ENCODE measurements at regions of chr11 and their contacts with region 1.

Region 1: GRCh38 chr11:33161120-33162005 is at the start of gene CSTF3:
- DNase-seq: peak; percentile 98
- ATAC-seq: peak; percentile 98
- H3K4me3 ChIP-seq: peak within 1 kb of the TSS; percentile 76 to 96 (median 83)
- H3K27ac ChIP-seq: peak within 1 kb of the TSS; percentile 86
- H3K4me1 ChIP-seq: peaks cover 42% of the 10 kb centered on the region
- H3K27me3 ChIP-seq: no peaks in the 10 kb centered on the region
- CTCF ChIP-seq: peak; percentile 37
- EP300 ChIP-seq: peak in 1 of 2 experiments; percentile 15; a peak in 1 of 4 replicates
- POLR2A ChIP-seq: peak; percentile 69 to 91
- RAD21 ChIP-seq: no peak
- total RNA-seq, gene CSTF3: 43.6 and 53.0 TPM in 2 replicates

Region 2: GRCh38 chr11:32893343-32894148 is 267.8 kb before region 1 on chr11:
- CTCF ChIA-PET with region 1: no interaction called
- POLR2A ChIA-PET with region 1: no interaction called
- in situ Hi-C with region 1: no loop called
- intact Hi-C with region 1: loop called (anchors 5 kb)
- DNase-seq: peak; percentile 58
- ATAC-seq: peak; percentile 77
- H3K4me3 ChIP-seq: peak overlapping the region; percentile 73 to 98 (median 93)
- H3K27ac ChIP-seq: peak overlapping the region; percentile 88
- H3K4me1 ChIP-seq: peaks cover 24% of the 10 kb centered on the region
- H3K27me3 ChIP-seq: peaks cover 0 to 3% of the 10 kb centered on the region in 2 experiments; a peak in 1 of 5 replicates
- CTCF ChIP-seq: peak; percentile 72
- EP300 ChIP-seq: no peak
- POLR2A ChIP-seq: no peak
- RAD21 ChIP-seq: no peak; the same call in 1 of the 2 replicates

Region 3: GRCh38 chr11:33211580-33211979 is 50.2 kb after region 1 on chr11:
- CTCF ChIA-PET with region 1: no interaction called
- POLR2A ChIA-PET with region 1: no interaction called
- in situ Hi-C with region 1: no loop called
- intact Hi-C with region 1: loop called (anchors 2 kb)
- DNase-seq: peak; percentile 89
- ATAC-seq: peak; percentile 87
- H3K4me3 ChIP-seq: no peak overlapping the region
- H3K27ac ChIP-seq: no peak overlapping the region
- H3K4me1 ChIP-seq: peaks cover 24% of the 10 kb centered on the region
- H3K27me3 ChIP-seq: no peaks in the 10 kb centered on the region
- CTCF ChIP-seq: no peak
- EP300 ChIP-seq: peak; percentile 45 to 54; a peak in 2 of 4 replicates
- POLR2A ChIP-seq: no peak
- RAD21 ChIP-seq: no peak

Region 4: DNA sequence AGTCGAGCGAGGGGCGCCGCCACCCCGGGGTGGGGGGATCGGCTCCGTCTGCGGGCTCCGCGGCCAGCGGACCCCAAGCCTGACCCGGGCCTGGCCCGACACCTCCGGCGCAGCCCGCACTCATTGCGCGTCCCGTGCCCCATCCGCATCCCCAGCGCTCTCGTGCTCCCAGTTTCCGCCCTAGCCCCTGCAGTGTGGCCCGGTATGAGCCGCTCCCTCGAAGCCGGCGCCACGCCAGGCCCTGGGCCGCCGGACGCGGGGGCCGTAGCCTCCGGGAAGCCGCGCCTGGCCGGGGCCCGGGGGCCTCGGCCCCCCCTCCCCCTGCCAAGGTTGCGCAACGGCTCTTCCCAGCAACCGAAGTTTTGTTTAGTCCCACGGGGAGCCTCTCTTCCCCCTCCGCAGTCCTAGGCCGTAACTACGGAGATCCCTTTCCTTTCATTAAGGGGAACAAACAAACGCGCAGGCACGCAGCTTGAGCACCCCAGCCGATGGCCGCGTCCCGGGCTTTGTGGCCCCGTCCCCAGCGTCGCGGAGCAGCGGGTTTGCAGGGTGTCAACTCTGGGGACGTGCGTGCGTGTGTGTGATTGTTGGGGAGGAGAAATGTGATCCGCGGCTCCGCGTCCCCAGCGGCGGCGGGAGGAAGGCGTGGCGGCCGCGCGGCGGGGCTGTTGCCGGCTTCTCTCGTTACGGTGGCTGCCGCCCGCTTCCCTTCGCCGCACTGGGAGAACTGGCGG is 96.7 kb after region 1 on chr11:
- CTCF ChIA-PET with region 1: no interaction called
- POLR2A ChIA-PET with region 1: no interaction called
- in situ Hi-C with region 1: no loop called
- intact Hi-C with region 1: loop called (anchors 2 kb)
- DNase-seq: peak; percentile 63
- ATAC-seq: peak; percentile 74
- H3K4me3 ChIP-seq: peak overlapping the region; percentile 98 to 100 (median 99)
- H3K27ac ChIP-seq: peak overlapping the region; percentile 98
- H3K4me1 ChIP-seq: peaks cover 42% of the 10 kb centered on the region
- H3K27me3 ChIP-seq: no peaks in the 10 kb centered on the region; a peak in 2 of 5 replicates
- CTCF ChIP-seq: peak; percentile 46
- EP300 ChIP-seq: no peak
- POLR2A ChIP-seq: peak; percentile 56 to 80
- RAD21 ChIP-seq: peak; percentile 28; the same call in 1 of the 2 replicates

Region 5: DNA sequence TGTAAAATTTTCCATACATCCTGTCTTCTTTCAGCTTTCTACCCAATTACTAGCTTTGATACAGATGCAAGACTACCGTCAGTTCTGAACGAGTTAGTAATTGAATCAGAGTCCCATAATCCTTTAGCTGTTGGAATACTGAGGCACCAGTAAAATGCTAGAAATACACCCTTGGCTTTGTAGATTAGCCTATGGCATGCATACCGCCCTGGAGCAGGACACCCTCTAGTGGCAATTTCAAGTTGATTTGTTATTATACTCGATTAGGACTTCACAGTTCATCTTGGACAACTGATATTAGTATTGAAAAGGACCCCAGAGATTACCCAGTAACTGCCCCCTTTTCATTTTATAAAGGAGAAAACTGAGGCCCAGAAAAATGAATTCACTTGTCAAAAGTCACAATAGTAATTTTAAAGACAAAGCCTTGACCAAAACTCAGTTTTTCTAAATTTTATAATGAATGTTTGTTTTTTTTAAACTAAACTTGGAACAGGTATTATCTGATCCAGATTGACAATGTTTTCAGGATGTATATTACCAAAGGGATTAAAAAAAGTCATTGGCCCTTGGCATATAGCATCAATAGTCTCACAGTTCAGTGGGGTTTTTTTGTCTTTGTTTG is 168.5 kb after region 1 on chr11:
- CTCF ChIA-PET with region 1: interaction called, 18 read pairs
- POLR2A ChIA-PET with region 1: no interaction called
- in situ Hi-C with region 1: no loop called
- intact Hi-C with region 1: loop called (anchors 1 kb)
- DNase-seq: peak; percentile 50
- ATAC-seq: peak; percentile 85
- H3K4me3 ChIP-seq: no peak overlapping the region
- H3K27ac ChIP-seq: no peak overlapping the region
- H3K4me1 ChIP-seq: no peaks in the 10 kb centered on the region
- H3K27me3 ChIP-seq: no peaks in the 10 kb centered on the region
- CTCF ChIP-seq: peak; percentile 67
- EP300 ChIP-seq: no peak
- POLR2A ChIP-seq: no peak
- RAD21 ChIP-seq: peak; percentile 50

Region 6: GRCh38 chr11:33687733-33688479 is 526.5 kb after region 1 on chr11:
- CTCF ChIA-PET with region 1: no interaction called
- POLR2A ChIA-PET with region 1: no interaction called
- in situ Hi-C with region 1: loop called (anchors 10 kb)
- intact Hi-C with region 1: loop called (anchors 1 kb)
- DNase-seq: peak; percentile 60
- ATAC-seq: peak; percentile 47
- H3K4me3 ChIP-seq: no peak overlapping the region
- H3K27ac ChIP-seq: no peak overlapping the region
- H3K4me1 ChIP-seq: peaks cover 34% of the 10 kb centered on the region
- H3K27me3 ChIP-seq: no peaks in the 10 kb centered on the region
- CTCF ChIP-seq: peak; percentile 86
- EP300 ChIP-seq: no peak
- POLR2A ChIP-seq: no peak
- RAD21 ChIP-seq: peak; percentile 74

Measured in HepG2 (cell line).